PC-3 (cell line): ENCODE measurements at regions of chr5 and their contacts with region 1.

Region 1: DNA sequence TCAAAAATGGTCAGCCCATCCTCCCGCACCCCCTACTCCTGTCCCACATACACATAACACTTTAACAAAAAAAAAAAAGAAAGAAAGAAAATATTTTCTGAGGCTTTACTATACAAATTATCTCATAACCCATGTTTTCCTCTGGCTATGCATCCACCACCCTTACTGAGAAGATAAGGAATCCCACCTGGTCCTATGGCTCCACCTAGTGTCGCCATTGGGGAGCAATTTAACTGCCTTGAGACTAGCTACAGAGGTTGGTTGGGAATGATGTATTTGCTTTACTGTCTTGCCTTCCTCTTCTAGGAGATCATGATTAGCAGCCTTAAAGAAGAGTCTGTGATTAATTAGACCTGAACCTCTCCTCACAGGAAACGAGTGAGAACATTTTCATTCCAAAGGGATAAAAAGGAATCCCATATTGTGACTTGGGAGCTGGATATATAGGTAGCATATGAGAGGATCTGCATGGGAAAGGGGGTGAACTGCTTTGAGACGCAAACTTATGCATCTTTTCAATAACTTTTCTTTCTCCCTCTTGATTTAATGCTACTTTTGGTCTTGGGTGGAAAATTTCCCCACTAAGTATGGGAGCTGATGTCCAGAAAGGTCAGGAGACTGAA is 77.7 kb upstream of the SELENOP start:
- DNase-seq: peak; percentile 96
- ATAC-seq: peak; percentile 89
- H3K4me3 ChIP-seq: no peak overlapping the region
- H3K27ac ChIP-seq: no peak overlapping the region
- H3K4me1 ChIP-seq: peaks cover 20% of the 10 kb centered on the region
- H3K27me3 ChIP-seq: no peaks in the 10 kb centered on the region
- CTCF ChIP-seq: peak; percentile 97

Region 2: GRCh38 chr5:41707853-41708603 is 1181.4 kb before region 1 on chr5:
- CTCF ChIA-PET with region 1: no interaction called
- POLR2A ChIA-PET with region 1: no interaction called
- intact Hi-C with region 1: loop called (anchors 2 kb)
- DNase-seq: peak; percentile 80
- ATAC-seq: peak; percentile 97
- H3K4me3 ChIP-seq: no peak overlapping the region
- H3K27ac ChIP-seq: no peak overlapping the region
- H3K4me1 ChIP-seq: no peaks in the 10 kb centered on the region
- H3K27me3 ChIP-seq: no peaks in the 10 kb centered on the region
- CTCF ChIP-seq: peak; percentile 90

Region 3: DNA sequence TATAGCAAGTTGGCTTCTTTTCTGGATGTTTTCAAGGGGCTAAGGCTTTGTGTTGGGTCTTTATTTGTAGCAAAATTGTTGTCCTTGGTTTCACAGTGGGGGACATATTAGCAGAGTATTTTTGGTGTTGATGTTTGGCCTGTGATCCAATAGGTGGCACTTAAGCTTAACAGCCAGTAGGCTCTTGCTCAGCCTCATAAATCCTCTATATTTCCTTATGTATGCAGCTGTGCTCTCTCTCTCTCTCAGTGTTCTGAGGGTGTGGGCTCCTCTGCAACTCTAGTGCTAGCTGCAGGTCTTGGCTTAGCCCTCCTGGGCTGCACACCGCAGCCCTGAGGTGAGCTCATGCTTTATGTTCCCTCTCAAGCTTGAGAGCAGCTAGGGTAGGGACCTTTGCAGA is 661.1 kb before region 1 on chr5:
- CTCF ChIA-PET with region 1: no interaction called
- POLR2A ChIA-PET with region 1: no interaction called
- intact Hi-C with region 1: loop called (anchors 5 kb)
- DNase-seq: peak; percentile 69
- ATAC-seq: peak; percentile 98
- H3K4me3 ChIP-seq: no peak overlapping the region
- H3K27ac ChIP-seq: no peak overlapping the region
- H3K4me1 ChIP-seq: peaks cover 5% of the 10 kb centered on the region; the same call in 1 of the 2 replicates
- H3K27me3 ChIP-seq: no peaks in the 10 kb centered on the region
- CTCF ChIP-seq: peak; percentile 78